ENCODE measurements at regions of chr4 and their contacts with region 1.

Region 1: GRCh38 chr4:74133786-74134499 is 24.0 kb upstream of the MTHFD2L start:
- DNase-seq: peak; percentile 76 to 80
- H3K4me3 ChIP-seq: no peak overlapping the region
- H3K4me3 Mint-ChIP-seq: no peak overlapping the region
- H3K27ac Mint-ChIP-seq: no peak overlapping the region
- H3K4me1 ChIP-seq: no peaks in the 10 kb centered on the region
- H3K4me1 Mint-ChIP-seq: peaks cover 9% of the 10 kb centered on the region
- H3K27me3 ChIP-seq: no peaks in the 10 kb centered on the region
- H3K27me3 Mint-ChIP-seq: no peaks in the 10 kb centered on the region
- CTCF ChIP-seq: peak; percentile 75 to 82

Region 2: DNA sequence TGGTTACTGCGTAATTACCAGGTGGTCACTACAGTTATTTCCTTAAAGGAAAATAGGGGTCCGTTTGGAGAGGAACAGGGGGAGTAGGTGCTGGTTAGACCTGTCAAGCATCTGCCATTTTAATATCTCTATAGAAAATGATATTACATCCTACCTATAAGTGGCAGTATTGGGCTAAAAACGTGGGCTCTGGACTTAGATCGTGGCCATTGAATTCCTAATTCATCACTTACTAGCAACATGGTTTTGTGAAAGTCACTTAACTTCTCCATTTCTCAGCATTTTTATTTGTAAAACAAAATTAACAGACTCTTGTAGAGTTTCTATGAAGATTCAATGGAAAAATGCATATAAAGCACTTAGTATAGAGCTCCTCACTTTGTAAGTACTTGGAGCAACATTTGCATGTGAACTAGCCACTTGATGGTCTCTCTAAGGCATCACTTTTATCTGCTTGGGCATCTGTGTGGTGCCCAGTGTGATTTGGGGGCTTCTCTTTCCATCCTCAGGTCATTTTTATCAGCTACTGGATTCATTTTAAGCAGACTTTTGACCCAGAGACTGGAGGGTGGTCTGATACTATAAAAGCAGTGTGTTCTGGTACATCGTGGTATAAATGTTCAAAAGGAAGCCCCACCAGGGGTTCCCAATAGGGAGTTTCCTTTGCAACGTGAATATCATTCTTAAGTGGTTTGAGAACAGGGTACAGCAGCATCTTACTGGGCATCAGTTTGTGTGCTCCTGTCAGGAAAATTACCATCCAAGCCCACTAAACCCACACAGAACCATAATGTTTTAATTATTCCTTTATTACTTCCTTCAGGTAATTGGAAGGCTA is 471.0 kb before region 1 on chr4:
- CTCF ChIA-PET with region 1: no interaction called
- POLR2A ChIA-PET with region 1: no interaction called
- intact Hi-C with region 1: loop called (anchors 1 kb)
- DNase-seq: no peak
- H3K4me3 ChIP-seq: no peak overlapping the region
- H3K4me3 Mint-ChIP-seq: no peak overlapping the region
- H3K27ac Mint-ChIP-seq: no peak overlapping the region
- H3K4me1 ChIP-seq: no peaks in the 10 kb centered on the region
- H3K4me1 Mint-ChIP-seq: no peaks in the 10 kb centered on the region
- H3K27me3 ChIP-seq: no peaks in the 10 kb centered on the region
- H3K27me3 Mint-ChIP-seq: no peaks in the 10 kb centered on the region
- CTCF ChIP-seq: peak in 1 of 2 experiments; percentile 19

Region 3: DNA sequence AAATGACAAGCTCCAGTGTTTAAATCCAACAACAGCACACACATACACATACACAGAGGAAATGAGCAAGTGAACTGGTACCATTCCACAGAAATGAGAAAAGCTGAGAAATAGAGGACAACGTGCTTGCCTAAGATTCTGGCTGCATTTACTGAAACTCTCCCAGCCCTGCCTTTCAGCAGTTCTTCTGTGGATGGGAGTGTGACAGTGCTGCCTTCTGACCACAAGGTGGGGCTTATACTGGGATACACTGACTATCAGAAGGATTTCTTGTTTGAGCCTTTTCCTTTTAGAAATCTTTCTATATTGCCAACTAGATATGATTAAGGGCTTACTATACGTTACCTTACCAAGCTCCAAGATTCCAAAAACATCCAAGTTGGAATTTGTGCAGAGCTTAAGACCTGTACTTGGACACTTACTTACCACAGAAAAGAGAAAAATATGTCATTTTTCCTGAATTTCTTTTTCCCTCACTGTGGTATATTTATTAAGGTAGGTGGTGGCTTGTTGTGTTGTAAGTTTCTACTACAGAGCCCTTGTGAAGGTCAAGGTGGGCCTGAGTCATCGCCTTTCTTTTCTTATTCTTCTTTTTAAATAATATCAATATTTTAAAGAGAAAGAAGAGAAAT is 404.3 kb before region 1 on chr4:
- CTCF ChIA-PET with region 1: interaction called, 7 read pairs
- POLR2A ChIA-PET with region 1: no interaction called
- intact Hi-C with region 1: loop called (anchors 1 kb)
- DNase-seq: peak; percentile 57 to 63
- H3K4me3 ChIP-seq: no peak overlapping the region
- H3K4me3 Mint-ChIP-seq: no peak overlapping the region
- H3K27ac Mint-ChIP-seq: no peak overlapping the region
- H3K4me1 ChIP-seq: no peaks in the 10 kb centered on the region; the same call in 1 of the 2 replicates
- H3K4me1 Mint-ChIP-seq: no peaks in the 10 kb centered on the region
- H3K27me3 ChIP-seq: no peaks in the 10 kb centered on the region
- H3K27me3 Mint-ChIP-seq: no peaks in the 10 kb centered on the region
- CTCF ChIP-seq: peak; percentile 79 to 84

Region 4: DNA sequence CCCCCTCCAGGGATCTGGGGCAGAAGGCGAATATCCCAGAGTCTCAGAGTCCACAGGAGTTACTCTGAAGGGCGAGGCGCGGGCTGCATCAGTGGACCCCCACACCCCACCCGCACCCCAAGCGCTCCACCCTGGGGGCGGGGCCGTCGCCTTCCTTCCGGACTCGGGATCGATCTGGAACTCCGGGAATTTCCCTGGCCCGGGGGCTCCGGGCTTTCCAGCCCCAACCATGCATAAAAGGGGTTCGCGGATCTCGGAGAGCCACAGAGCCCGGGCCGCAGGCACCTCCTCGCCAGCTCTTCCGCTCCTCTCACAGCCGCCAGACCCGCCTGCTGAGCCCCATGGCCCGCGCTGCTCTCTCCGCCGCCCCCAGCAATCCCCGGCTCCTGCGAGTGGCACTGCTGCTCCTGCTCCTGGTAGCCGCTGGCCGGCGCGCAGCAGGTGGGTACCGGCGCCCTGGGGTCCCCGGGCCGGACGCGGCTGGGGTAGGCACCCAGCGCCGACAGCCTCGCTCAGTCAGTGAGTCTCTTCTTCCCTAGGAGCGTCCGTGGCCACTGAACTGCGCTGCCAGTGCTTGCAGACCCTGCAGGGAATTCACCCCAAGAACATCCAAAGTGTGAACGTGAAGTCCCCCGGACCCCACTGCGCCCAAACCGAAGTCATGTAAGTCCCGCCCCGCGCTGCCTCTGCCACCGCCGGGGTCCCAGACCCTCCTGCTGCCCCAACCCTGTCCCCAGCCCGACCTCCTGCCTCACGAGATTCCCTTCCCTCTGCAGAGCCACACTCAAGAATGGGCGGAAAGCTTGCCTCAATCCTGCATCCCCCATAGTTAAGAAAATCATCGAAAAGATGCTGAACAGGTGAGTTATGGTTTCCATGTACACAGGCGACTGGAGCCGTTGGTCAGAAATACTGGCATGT is 264.6 kb before region 1 on chr4 and contains the start of gene CXCL1:
- CTCF ChIA-PET with region 1: interaction called, 9 read pairs
- POLR2A ChIA-PET with region 1: no interaction called
- intact Hi-C with region 1: loop called (anchors 1 kb)
- DNase-seq: peak; percentile 21 to 39
- H3K4me3 ChIP-seq: peak within 1 kb of the TSS; percentile 46
- H3K4me3 Mint-ChIP-seq: peak within 1 kb of the TSS; percentile 91
- H3K27ac Mint-ChIP-seq: peak within 1 kb of the TSS; percentile 61
- H3K4me1 ChIP-seq: no peaks in the 10 kb centered on the region; the same call in 1 of the 2 replicates
- H3K4me1 Mint-ChIP-seq: no peaks in the 10 kb centered on the region
- H3K27me3 ChIP-seq: no peaks in the 10 kb centered on the region
- H3K27me3 Mint-ChIP-seq: peaks cover 7% of the 10 kb centered on the region
- CTCF ChIP-seq: no peak
- total RNA-seq, gene CXCL1: 0.79 TPM in 1 of 2 replicates, not detected in the other

Region 5: DNA sequence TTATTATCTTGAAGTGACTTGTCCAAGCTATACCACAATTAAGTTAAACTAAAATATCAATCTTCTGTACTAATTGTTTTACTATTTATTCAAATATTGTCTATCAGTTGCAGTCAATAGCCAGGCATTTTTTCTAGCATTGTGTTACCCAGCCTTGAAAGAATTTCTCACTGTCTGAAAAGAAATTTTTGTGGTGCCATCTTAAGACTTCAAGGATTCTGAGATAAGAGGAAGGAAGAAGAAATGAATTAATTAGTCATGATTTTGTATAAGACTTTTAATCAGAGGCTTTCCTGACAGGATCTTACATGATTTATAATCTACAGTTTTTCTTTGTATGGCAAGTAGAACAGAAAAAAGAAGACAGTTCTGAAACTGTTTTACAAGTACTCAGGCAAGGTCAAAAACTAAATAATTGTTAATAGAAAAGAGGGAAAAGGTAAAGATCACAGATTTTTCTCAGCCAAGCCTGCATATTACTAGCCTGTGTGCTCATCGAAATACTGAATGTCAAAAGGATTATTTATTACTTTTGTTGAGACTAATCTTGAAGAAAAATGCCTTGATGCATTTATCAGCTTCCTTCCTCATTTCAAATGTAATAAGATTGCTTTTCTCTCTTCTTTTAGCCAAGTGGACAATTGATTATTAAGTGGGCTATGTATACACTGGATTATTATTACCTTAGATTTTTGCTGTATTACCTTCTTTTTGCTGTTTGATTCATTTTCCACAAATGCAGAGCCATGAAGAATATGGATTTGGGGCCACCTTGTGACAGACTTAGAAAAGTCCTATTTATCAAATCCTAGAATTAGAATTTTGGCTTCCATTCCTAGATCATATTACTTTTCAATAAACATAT is 210.9 kb before region 1 on chr4:
- CTCF ChIA-PET with region 1: no interaction called
- POLR2A ChIA-PET with region 1: no interaction called
- intact Hi-C with region 1: loop called (anchors 1 kb)
- DNase-seq: peak in 1 of 2 experiments; percentile 12
- H3K4me3 ChIP-seq: no peak overlapping the region
- H3K4me3 Mint-ChIP-seq: no peak overlapping the region
- H3K27ac Mint-ChIP-seq: no peak overlapping the region
- H3K4me1 ChIP-seq: no peaks in the 10 kb centered on the region
- H3K4me1 Mint-ChIP-seq: peaks cover 5% of the 10 kb centered on the region
- H3K27me3 ChIP-seq: no peaks in the 10 kb centered on the region
- H3K27me3 Mint-ChIP-seq: peaks cover 3% of the 10 kb centered on the region
- CTCF ChIP-seq: peak; percentile 7 to 33

Region 6: GRCh38 chr4:74038161-74039064 is 95.5 kb before region 1 on chr4 and contains the start of gene CXCL3:
- CTCF ChIA-PET with region 1: interaction called, 8 read pairs
- POLR2A ChIA-PET with region 1: no interaction called
- intact Hi-C with region 1: loop called (anchors 1 kb)
- DNase-seq: peak; percentile 71 to 75
- H3K4me3 ChIP-seq: peak within 1 kb of the TSS; percentile 53
- H3K4me3 Mint-ChIP-seq: peak within 1 kb of the TSS; percentile 78
- H3K27ac Mint-ChIP-seq: peak within 1 kb of the TSS; percentile 14
- H3K4me1 ChIP-seq: no peaks in the 10 kb centered on the region; the same call in 1 of the 2 replicates
- H3K4me1 Mint-ChIP-seq: peaks cover 15% of the 10 kb centered on the region
- H3K27me3 ChIP-seq: no peaks in the 10 kb centered on the region
- H3K27me3 Mint-ChIP-seq: no peaks in the 10 kb centered on the region
- CTCF ChIP-seq: no peak
- total RNA-seq, gene CXCL3: 1.9 and 4.3 TPM in 2 replicates

Region 7: GRCh38 chr4:74181219-74181618 is 47.3 kb after region 1 on chr4:
- CTCF ChIA-PET with region 1: no interaction called
- POLR2A ChIA-PET with region 1: no interaction called
- intact Hi-C with region 1: no loop called
- DNase-seq: no peak
- H3K4me3 ChIP-seq: no peak overlapping the region
- H3K4me3 Mint-ChIP-seq: no peak overlapping the region
- H3K27ac Mint-ChIP-seq: no peak overlapping the region
- H3K4me1 ChIP-seq: no peaks in the 10 kb centered on the region
- H3K4me1 Mint-ChIP-seq: no peaks in the 10 kb centered on the region
- H3K27me3 ChIP-seq: no peaks in the 10 kb centered on the region
- H3K27me3 Mint-ChIP-seq: no peaks in the 10 kb centered on the region
- CTCF ChIP-seq: no peak